ENCODE measurements at regions of chr19 and their contacts with region 1.

Region 1: GRCh38 chr19:6790194-6791128 is 18.0 kb downstream of the VAV1 start:
- DNase-seq: no peak
- CTCF ChIP-seq: no peak

Region 2: GRCh38 chr19:6738047-6738786 is 52.2 kb before region 1 on chr19:
- CTCF ChIA-PET with region 1: no interaction called
- POLR2A ChIA-PET with region 1: no interaction called
- DNase-seq: peak; percentile 63
- CTCF ChIP-seq: peak; percentile 92

Region 3: GRCh38 chr19:6767357-6768235 is 22.9 kb before region 1 on chr19 and contains the start of gene SH2D3A:
- CTCF ChIA-PET with region 1: interaction called, 11 read pairs
- POLR2A ChIA-PET with region 1: no interaction called
- DNase-seq: peak; percentile 95
- CTCF ChIP-seq: peak; percentile 3

Region 4: DNA sequence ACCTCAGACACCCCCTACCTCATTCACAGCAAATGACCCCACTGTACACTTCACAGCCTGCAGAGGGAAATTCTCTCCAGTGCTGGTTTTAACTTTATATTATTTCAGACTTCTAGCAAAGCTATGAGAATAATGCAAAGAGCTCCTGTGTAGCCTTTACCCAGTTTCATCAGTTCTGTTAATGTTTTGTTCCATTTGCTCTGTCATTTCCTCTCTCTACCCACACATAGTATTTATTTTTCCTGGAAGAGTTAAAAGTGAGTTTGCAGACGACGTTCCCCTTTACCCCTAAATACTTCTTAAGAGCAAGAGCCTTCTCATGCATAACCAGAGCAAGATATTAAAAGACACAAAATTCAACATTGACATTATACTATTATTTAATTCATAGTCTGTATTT is 47.1 kb after region 1 on chr19:
- CTCF ChIA-PET with region 1: no interaction called
- POLR2A ChIA-PET with region 1: no interaction called
- DNase-seq: no peak
- CTCF ChIP-seq: no peak